Psoas muscle (tissue), 8 donors: ENCODE measurements at regions of chr3 and their contacts with region 1.

Region 1: DNA sequence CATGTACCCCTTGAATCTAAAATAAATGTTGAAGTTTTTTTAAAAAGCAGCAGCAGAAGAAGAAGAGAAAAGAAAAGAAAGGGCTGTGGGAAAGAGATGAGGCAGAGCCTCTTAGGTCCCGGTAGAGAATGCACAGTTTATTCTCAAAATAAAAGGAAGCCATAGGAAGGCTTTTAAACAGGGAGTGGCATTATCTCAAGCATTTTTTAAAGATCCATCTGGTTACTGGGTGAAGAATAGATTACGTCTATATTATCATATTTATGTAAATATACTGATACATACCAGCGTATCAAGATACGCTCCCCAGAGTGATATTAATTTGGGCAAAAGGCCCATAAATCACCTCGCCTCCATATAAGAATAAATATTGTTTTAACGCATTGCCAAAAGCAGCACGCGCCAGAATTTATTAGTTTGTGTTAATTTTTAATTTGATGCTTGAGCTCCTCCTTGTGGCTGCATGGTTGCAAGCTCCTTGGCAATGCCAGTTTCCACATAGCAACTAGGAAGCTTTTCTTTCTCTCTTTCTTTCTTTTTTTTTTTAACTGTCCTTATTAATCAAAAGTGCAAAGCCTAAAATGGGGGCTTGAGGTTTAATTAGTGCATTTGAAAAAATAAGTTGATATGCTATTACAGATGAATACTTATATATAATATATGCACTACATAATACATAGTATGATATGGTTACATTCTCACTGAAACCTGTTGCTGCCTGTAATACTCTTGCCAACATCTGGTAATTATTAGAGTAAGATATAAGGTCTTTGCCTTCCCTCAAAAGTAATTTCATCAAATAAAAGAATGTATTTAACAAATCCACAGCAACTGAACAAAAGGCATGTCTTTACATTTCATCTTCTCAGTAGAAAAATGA is 242.8 kb upstream of the UBE2E2 start:
- DNase-seq: no peak
- ATAC-seq: peak in 2 of 4 donors; percentile 59 to 78
- H3K4me3 ChIP-seq: peak overlapping the region; percentile 37
- H3K27ac ChIP-seq: no peak overlapping the region
- H3K4me1 ChIP-seq: peaks cover 6% of the 10 kb centered on the region
- H3K27me3 ChIP-seq: no peaks in the 10 kb centered on the region
- CTCF ChIP-seq: peak; percentile 78

Region 2: DNA sequence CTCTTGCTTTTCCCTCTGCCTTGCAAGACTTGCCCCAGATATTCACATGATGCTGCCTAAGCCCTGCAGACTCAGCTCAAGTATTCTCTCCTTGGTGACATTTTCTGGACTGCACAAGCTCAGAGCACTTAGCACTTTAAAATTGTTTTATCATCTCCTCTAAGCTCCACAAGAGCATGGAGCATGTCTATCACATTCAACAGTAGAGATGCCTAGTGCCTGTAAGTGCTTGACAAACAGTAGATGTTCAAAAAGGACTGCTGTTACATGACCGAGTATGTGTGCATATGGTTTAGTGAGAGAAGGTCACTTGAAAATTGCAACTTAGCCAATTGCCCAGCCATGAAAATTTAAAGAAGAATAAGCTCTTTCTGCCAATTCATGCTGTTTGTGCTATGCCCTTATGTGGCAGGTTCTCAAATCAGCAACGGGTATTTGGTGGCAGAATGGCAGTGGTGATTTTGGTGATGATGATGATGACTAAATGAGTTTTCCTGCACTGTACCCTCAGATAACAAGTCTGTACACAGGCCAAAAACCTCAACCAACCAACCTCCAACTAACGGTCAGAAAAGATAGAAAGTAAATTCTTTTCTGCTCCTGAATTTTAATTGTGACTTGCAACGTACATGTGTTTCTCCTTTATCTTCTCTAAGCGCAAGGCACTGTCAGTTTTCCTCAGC is 404.5 kb before region 1 on chr3:
- intact Hi-C with region 1: loop called in 1 of 2 experiments (anchors 5 kb)
- DNase-seq: no peak
- ATAC-seq: no peak
- H3K4me3 ChIP-seq: no peak overlapping the region
- H3K27ac ChIP-seq: no peak overlapping the region
- H3K4me1 ChIP-seq: no peaks in the 10 kb centered on the region
- H3K27me3 ChIP-seq: no peaks in the 10 kb centered on the region
- CTCF ChIP-seq: no peak

Region 3: GRCh38 chr3:22565393-22565792 is 395.0 kb before region 1 on chr3:
- intact Hi-C with region 1: loop called (anchors 2 to 5 kb)
- DNase-seq: no peak
- ATAC-seq: no peak
- H3K4me3 ChIP-seq: no peak overlapping the region
- H3K27ac ChIP-seq: no peak overlapping the region
- H3K4me1 ChIP-seq: no peaks in the 10 kb centered on the region
- H3K27me3 ChIP-seq: no peaks in the 10 kb centered on the region
- CTCF ChIP-seq: no peak

Region 4: GRCh38 chr3:22922317-22922716 is 38.0 kb before region 1 on chr3:
- intact Hi-C with region 1: loop called in 1 of 2 experiments (anchors 5 kb)
- DNase-seq: no peak
- ATAC-seq: no peak
- H3K4me3 ChIP-seq: no peak overlapping the region
- H3K27ac ChIP-seq: no peak overlapping the region
- H3K4me1 ChIP-seq: peaks cover 3% of the 10 kb centered on the region
- H3K27me3 ChIP-seq: no peaks in the 10 kb centered on the region
- CTCF ChIP-seq: peak; percentile 40